Tibial artery (tissue), 4 donors: ENCODE measurements at regions of chr14 and their contacts with region 1.

Region 1: GRCh38 chr14:78848234-78848820 is 678.2 kb downstream of the NRXN3 start:
- DNase-seq: no peak
- H3K4me3 ChIP-seq: no peak overlapping the region
- H3K27ac ChIP-seq: no peak overlapping the region
- H3K4me1 ChIP-seq: no peaks in the 10 kb centered on the region
- H3K27me3 ChIP-seq: no peaks in the 10 kb centered on the region
- CTCF ChIP-seq: peak; percentile 47 to 57

Region 2: GRCh38 chr14:77270361-77271112 is 1577.8 kb before region 1 on chr14:
- intact Hi-C with region 1: loop called (anchors 10 kb)
- DNase-seq: no peak
- H3K4me3 ChIP-seq: no peak overlapping the region
- H3K27ac ChIP-seq: no peak overlapping the region
- H3K4me1 ChIP-seq: peaks cover 0 to 6% (median 0%) of the 10 kb centered on the region in 4 donors
- H3K27me3 ChIP-seq: peaks cover 0 to 49% of the 10 kb centered on the region in 2 donors
- CTCF ChIP-seq: no peak

Region 3: GRCh38 chr14:78921856-78922255 is 73.5 kb after region 1 on chr14:
- intact Hi-C with region 1: no loop called
- DNase-seq: no peak
- H3K4me3 ChIP-seq: no peak overlapping the region
- H3K27ac ChIP-seq: no peak overlapping the region
- H3K4me1 ChIP-seq: no peaks in the 10 kb centered on the region
- H3K27me3 ChIP-seq: no peaks in the 10 kb centered on the region
- CTCF ChIP-seq: no peak

Region 4: DNA sequence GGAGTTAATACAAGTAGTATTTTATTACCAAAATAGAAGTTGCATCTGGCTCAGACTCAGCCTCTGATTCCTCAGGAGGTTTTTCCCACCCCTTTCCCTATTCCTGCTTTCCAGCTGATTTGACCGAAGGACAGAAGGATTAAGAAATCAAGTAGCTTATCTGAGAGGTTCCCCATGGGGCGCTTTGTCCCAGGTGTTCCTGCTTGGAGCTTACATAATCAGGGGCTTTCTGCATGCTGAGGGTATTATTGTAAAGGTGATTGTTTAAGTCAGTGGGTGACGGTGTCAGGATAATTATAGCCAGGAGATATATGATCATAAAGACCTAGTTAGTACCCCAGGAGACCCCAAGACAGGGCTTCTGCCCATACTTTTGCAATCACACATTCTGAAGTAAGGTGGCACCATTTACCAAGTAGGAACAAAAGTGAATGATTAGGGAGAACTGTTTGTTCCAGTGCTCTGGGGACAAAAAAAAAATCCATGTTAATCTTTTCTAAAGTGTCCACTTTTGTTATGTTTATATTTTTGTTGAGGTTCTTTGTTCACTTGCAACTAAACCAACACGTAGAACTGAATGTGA is 243.1 kb after region 1 on chr14:
- intact Hi-C with region 1: no loop called
- DNase-seq: no peak
- H3K4me3 ChIP-seq: no peak overlapping the region
- H3K27ac ChIP-seq: no peak overlapping the region
- H3K4me1 ChIP-seq: peaks cover 0 to 15% (median 0%) of the 10 kb centered on the region in 4 donors
- H3K27me3 ChIP-seq: no peaks in the 10 kb centered on the region
- CTCF ChIP-seq: no peak